ENCODE measurements at regions of chr6 and their contacts with region 1.

Region 1: DNA sequence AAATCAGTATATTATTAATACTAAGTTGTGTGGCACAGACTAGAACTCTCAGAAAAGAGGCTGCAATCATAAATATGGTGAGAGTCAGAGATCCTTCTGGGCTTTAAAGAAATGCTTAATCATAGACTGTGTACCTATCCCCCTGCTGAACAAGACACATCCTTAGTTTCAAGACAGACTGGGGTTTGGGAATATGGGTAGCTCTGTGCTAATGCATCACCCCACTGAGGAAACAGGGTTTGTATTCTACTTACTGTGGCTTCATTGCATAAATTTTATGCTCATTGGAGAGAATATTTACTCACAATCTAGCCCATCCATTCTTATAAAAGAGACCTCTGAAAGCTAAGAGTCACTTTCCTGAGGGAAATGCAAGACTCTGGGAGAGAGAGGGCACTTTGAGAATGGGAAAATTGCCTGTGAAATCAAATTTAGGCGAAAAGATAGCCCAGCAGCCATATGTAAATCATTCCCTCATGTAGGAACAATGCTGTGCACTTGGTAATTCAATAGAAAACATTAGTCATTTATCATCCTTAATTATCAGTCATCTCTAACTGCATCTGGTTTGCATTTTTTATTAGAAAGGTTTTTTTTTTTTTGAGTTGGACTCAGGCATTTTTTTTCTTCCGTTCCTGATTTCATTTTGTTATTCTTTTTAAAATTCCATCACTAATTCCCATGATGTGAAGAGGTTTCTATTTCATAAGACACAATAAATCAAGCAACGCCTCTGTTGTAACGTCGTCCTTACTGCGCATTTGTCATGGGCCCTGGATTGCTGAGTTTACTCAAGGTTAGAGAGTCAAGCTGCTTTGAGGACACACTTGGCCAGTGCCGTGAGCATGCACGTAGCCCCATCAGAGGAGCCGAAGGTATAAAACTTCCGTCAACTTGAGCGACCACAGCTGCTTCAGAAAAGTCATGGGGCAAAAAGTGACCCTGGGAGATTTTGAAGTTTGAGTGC is 91.8 kb downstream of the TRMT11 start:
- DNase-seq: peak; percentile 62
- H3K4me3 ChIP-seq: no peak overlapping the region
- H3K27me3 ChIP-seq: no peaks in the 10 kb centered on the region
- CTCF ChIP-seq: no peak

Region 2: GRCh38 chr6:125968493-125968892 is 109.6 kb before region 1 on chr6:
- CTCF ChIA-PET with region 1: no interaction called
- POLR2A ChIA-PET with region 1: interaction called, 16 read pairs
- DNase-seq: no peak
- H3K4me3 ChIP-seq: no peak overlapping the region
- H3K27me3 ChIP-seq: no peaks in the 10 kb centered on the region
- CTCF ChIP-seq: no peak

Measured in BJ (cell line).